ENCODE measurements at regions of chr6 and their contacts with region 1.

Region 1: GRCh38 chr6:124285146-124285545 is 481.5 kb downstream of the NKAIN2 start:
- DNase-seq: no peak
- ATAC-seq: no peak
- H3K4me3 ChIP-seq: no peak overlapping the region
- H3K27ac ChIP-seq: no peak overlapping the region
- H3K4me1 ChIP-seq: no peaks in the 10 kb centered on the region
- H3K27me3 ChIP-seq: no peaks in the 10 kb centered on the region
- CTCF ChIP-seq: no peak
- EP300 ChIP-seq: no peak
- POLR2A ChIP-seq: no peak
- RAD21 ChIP-seq: no peak

Region 2: GRCh38 chr6:123448306-123448884 is 836.8 kb before region 1 on chr6:
- CTCF ChIA-PET with region 1: no interaction called
- POLR2A ChIA-PET with region 1: no interaction called
- in situ Hi-C with region 1: no loop called
- intact Hi-C with region 1: loop called (anchors 5 kb)
- DNase-seq: peak in 1 of 4 experiments; percentile 2
- ATAC-seq: no peak
- H3K4me3 ChIP-seq: no peak overlapping the region
- H3K27ac ChIP-seq: no peak overlapping the region
- H3K4me1 ChIP-seq: no peaks in the 10 kb centered on the region
- H3K27me3 ChIP-seq: no peaks in the 10 kb centered on the region
- CTCF ChIP-seq: no peak
- EP300 ChIP-seq: no peak
- POLR2A ChIP-seq: no peak
- RAD21 ChIP-seq: no peak

Region 3: DNA sequence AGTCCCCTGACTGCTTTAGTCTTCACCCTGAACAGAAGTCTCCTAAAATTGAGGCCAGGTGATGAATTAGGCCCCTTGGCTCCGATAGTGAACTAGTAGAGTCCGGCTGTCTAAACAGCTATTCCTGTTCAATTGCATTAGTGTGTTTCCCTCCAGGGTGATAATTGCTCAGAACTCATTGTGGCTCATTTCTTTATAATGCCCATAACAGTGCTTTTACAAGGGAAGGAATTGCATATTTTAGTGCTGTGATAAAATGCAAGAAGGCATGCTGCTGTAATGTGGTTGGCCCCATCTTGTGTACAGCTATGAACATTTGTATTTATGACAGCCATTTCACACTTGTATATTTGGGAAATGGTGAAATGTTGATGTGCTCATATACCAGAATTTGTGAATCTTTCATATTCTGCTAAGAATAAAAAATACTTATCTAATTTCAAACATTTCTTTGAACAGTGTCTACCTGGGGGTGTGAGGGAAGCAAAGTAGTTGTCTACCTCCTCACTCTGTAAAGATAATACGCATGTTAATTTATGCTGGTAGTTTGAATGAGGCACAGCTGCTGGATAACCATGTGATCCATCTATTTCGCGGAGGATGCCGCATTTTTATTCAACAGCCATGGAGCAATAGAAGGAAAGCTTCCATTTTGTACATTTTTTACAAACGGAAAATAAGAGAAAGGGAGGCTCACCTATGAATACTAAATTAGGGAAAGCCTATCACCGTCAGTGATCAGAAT is 30.0 kb before region 1 on chr6:
- CTCF ChIA-PET with region 1: no interaction called
- POLR2A ChIA-PET with region 1: no interaction called
- in situ Hi-C with region 1: no loop called
- intact Hi-C with region 1: no loop called
- DNase-seq: no peak
- ATAC-seq: no peak
- H3K4me3 ChIP-seq: no peak overlapping the region
- H3K27ac ChIP-seq: no peak overlapping the region
- H3K4me1 ChIP-seq: no peaks in the 10 kb centered on the region
- H3K27me3 ChIP-seq: no peaks in the 10 kb centered on the region
- CTCF ChIP-seq: no peak
- EP300 ChIP-seq: no peak
- POLR2A ChIP-seq: no peak
- RAD21 ChIP-seq: no peak

Region 4: GRCh38 chr6:124694139-124694782 is 409.1 kb after region 1 on chr6:
- CTCF ChIA-PET with region 1: no interaction called
- POLR2A ChIA-PET with region 1: no interaction called
- in situ Hi-C with region 1: no loop called
- intact Hi-C with region 1: no loop called
- DNase-seq: no peak
- ATAC-seq: no peak
- H3K4me3 ChIP-seq: no peak overlapping the region
- H3K27ac ChIP-seq: no peak overlapping the region
- H3K4me1 ChIP-seq: no peaks in the 10 kb centered on the region
- H3K27me3 ChIP-seq: no peaks in the 10 kb centered on the region
- CTCF ChIP-seq: no peak
- EP300 ChIP-seq: no peak
- POLR2A ChIP-seq: no peak
- RAD21 ChIP-seq: no peak

Measured in K562 (cell line).